ENCODE measurements at regions of chr1 and their contacts with region 1.

Region 1: GRCh38 chr1:25430666-25431505 is at the start of gene MACO1:
- DNase-seq: peak; percentile 98
- total RNA-seq, gene MACO1: 10.3 TPM

Region 2: DNA sequence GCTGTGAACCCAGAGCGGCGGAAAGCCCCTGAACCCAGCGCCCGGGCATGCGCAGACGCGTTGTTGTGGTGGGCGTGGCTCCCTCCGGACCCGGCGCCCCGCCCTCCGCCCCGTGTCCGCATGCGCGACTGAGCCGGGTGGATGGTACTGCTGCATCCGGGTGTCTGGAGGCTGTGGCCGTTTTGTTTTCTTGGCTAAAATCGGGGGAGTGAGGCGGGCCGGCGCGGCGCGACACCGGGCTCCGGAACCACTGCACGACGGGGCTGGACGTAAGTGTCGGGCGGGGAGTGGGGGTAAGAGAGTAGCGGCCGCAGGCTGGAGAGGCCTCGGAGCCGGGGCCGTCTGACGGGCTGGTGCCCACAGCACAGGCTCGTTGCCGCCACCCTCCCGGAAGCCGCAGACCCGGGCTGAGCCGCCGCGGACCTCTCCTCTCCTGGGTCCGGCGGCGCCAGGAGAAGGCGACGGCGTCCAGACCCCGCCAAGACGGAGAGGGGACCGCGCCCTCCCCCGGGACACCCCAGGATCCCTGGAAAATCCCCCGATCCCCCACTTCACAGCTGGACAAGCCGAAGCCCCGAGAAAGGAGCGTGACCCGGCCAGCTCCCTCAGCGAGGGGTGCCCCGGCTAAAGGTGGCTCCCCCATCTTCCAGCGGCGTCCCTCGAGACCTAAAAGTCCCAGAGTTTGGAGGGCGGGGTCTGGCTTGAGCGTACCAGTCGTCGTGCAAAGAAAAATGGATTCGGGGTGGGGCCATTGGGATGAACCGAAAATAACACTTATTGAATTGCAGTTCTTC is 92.5 kb before region 1 on chr1 and contains the start of gene TMEM50A:
- intact Hi-C with region 1: loop called (anchors 5 kb)
- DNase-seq: peak; percentile 96
- total RNA-seq, gene TMEM50A: 97.7 TPM

Region 3: DNA sequence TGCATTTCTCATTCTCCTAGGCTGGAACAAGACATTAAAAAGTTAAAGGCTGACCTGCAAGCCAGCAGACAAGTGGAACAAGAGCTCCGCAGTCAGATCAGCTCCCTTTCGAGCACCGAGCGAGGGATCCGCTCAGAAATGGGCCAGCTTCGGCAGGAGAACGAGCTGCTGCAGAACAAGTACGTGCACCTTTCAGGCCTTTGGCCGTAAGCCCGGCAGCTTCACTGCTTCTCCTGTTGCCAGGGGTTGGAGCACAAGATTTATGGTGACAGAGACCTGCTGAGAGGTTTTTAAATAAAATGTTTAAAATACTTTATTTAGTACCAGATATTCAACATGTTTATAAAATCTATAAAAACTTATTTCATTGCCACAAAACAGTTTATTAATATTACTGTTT is 53.2 kb after region 1 on chr1:
- intact Hi-C with region 1: loop called (anchors 5 kb)
- DNase-seq: no peak

Region 4: GRCh38 chr1:25977801-25978200 is 546.9 kb after region 1 on chr1:
- intact Hi-C with region 1: no loop called
- DNase-seq: no peak